Dendritic cell treated with granulocyte-macrophage colony-stimulating factor and Interleukin-4, amounts not matched to agents 40 ng/mL and 50 ng/mL, for 4 days (primary cell): ENCODE measurements at regions of chr19 and their contacts with region 1.

Region 1: GRCh38 chr19:54102421-54103169 is at the start of gene NDUFA3:
- H3K4me3 Mint-ChIP-seq: peak within 1 kb of the TSS; percentile 100
- H3K27ac Mint-ChIP-seq: peak within 1 kb of the TSS; percentile 93
- H3K4me1 Mint-ChIP-seq: peaks cover 65% of the 10 kb centered on the region
- H3K27me3 Mint-ChIP-seq: no peaks in the 10 kb centered on the region

Region 2: GRCh38 chr19:54115109-54116063 is 12.8 kb after region 1 on chr19 and contains the starts of genes PRPF31 and TFPT:
- intact Hi-C with region 1: loop called (anchors 1 kb)
- H3K4me3 Mint-ChIP-seq: peak within 1 kb of the TSS; percentile 85
- H3K27ac Mint-ChIP-seq: peak within 1 kb of the TSS; percentile 94
- H3K4me1 Mint-ChIP-seq: peaks cover 48% of the 10 kb centered on the region
- H3K27me3 Mint-ChIP-seq: no peaks in the 10 kb centered on the region